ENCODE measurements at regions of chr7 and their contacts with region 1.

Region 1: DNA sequence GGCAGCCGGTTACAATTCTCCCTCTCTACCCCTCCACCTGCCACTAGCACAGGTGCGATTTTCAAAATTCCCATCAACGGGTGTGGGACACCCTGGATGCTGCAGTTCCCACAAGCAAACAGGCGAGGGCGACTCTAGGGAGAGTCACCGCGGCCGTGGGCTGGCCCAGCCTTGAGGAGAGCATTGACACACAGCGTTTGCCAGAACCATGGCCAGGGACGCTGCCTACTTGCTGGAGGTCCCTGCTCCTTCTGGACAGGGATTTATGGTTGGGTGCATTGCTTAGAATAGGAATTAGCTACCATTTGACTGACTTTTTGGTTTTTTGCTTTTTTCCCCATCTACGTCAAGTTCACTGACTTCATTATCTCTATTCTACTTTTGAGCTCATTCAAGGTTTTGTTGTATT is 19.0 kb upstream of the CLDN4 start:
- DNase-seq: no peak
- H3K4me3 ChIP-seq: no peak overlapping the region
- CTCF ChIP-seq: peak; percentile 87

Region 2: GRCh38 chr7:73769992-73770859 is 41.5 kb before region 1 on chr7 and contains the start of gene CLDN3:
- CTCF ChIA-PET with region 1: no interaction called
- POLR2A ChIA-PET with region 1: no interaction called
- DNase-seq: no peak
- H3K4me3 ChIP-seq: no peak within 1 kb of the TSS
- CTCF ChIP-seq: no peak

Region 3: DNA sequence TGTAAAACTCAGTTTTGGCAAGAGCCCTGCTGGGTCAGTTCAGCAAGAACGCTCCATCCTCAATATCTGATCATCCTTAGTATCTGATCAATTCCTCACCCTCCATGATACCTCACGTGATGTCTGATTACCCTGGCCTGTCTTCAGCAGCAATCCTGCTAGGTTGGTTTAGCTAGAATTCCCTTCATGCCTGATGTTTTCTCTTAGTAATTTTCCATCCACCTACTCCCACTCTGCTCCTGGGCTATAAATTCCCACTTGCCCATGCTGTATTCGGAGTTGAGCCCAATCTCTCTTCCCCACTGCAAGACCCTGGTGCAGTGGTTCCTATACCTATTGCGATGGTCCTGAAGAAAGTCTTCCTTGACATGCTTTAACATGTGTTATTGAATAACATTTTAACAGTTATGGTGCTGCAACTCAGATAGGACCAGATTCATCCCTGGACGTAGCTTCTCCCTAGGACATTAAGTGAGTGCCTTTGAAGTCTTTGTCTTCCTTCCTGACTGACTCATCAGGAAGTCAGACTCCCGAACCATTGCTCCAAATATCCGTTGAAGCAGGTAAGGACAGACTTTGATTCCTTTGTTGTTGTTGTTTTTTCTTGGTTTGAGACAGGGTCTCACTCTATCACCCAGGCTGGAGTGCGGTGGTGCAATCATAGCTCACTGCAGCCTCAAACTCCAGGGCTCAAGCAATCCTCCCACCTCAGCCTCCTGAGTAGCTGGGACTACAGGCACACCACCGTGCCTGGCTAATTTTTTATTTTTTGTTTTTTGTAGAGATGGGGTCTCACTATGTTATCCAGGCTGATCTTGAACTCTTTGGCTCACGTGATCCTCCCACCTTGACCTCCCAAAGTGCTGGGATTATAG is 12.3 kb before region 1 on chr7:
- CTCF ChIA-PET with region 1: interaction called, 19 read pairs
- POLR2A ChIA-PET with region 1: no interaction called
- DNase-seq: no peak
- H3K4me3 ChIP-seq: no peak overlapping the region
- CTCF ChIP-seq: no peak

Region 4: DNA sequence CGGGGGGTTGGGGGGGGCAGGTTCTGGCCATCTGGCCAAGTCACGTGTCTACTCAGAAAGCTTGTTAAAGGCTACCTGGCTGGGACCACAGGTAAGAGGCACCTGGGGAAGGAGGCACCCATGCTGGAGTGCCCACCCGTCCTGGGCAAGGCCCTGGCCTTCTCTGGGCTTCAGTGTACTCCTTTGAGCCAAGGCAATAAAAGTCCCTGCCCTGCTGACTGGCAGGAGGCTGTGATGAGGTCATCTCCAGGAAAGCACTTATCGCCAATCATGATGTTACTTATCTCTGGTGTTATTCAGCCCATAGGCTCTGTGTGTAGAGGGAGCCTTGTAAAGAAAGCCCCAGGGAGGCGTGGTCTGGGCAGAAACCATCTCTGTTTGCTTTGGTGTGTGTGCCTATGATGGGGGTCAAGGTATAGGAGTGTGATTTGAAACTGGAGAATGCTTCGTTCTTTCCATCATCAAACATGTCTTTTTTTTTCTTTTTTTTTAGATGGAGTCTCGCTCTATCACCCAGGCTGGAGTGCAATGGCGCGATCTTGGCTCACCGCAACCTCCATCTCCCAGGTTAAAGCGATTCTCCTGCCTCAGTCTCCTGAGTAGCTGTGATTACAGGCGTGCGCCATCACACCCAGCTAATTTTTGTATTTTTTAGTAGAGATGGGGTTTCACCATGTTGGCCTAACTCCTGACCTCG is 16.5 kb after region 1 on chr7:
- CTCF ChIA-PET with region 1: interaction called, 14 read pairs
- POLR2A ChIA-PET with region 1: no interaction called
- DNase-seq: no peak
- H3K4me3 ChIP-seq: no peak overlapping the region
- CTCF ChIP-seq: no peak